ENCODE measurements at regions of chr16 and their contacts with region 1.

Region 1: DNA sequence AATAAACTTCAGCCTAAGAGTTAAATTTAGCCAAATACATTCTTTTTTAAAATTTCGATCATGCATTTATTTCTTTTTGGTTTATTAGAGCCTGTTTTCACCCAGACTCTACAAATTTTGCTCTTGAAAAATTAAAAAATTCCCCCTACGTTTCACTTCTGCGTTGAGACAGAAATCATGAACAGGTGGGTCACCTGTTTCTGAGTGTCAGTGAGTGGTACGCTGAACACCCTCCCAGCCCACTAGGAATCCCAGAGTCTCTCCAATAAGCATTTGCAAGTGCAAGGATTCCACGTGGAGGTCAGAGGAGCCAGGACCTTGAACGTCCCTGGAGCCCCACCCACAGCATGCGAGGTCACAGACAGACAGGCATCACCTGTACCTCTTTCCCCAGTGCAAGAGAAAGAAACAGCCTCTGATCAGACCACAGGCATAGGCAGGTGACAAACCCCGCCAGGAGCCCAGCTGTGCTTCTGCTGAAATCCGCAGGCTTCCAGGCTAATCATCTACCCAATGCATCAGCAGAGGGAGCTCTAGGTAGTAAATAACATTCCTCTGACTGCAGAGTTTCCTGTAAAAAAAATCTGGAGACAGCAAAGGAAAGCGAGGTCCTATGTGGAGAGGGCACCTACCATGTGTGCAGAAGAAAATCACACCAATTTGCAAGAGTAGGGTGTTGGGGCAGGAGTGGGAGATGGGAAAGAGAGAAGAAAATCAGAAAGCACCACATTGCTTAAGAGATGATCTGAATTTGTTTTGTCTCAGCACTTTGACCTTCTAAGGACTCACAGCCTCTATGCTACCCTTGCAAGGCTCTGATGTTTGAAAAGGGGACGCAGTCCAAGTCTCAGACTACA is 5.9 kb upstream of the XYLT1 start:
- DNase-seq: no peak
- ATAC-seq: peak in 7 of 8 donors; percentile 58 to 77 (median 68)
- H3K4me3 ChIP-seq: no peak overlapping the region
- H3K27ac ChIP-seq: no peak overlapping the region
- H3K4me1 ChIP-seq: peaks cover 0 to 19% (median 0%) of the 10 kb centered on the region in 9 donors
- H3K27me3 ChIP-seq: peaks cover 0 to 68% (median 43%) of the 10 kb centered on the region in 7 donors
- CTCF ChIP-seq: peak in 8 of 9 donors; percentile 14 to 64 (median 54)

Region 2: DNA sequence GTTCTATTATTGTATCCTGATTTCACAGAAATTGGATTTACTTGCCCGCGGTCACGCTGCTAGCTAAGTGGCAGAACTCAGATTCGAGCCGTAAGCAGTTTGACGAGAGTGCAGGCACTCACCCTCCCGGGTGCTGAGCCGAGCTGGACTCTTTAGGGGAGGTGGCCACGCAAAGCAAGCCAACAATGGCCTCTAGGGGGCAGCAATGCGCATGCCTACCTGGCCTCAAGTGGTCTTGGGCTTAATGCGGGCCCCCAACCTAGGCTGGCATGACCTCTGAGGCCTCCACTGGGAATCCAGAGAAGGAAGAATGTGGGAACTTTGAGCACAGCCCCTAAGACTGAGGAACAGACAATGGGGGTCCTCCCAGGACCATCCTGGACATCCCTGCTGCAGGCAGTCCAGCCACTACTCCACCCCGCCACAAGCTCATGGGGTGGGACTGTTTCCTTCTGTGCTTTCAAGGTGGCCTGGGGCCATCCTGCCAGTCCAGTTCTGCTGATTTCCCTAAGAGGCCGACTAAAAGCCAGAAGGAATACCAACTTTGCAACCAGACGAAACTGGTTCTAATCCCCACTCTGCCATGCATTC is 282.4 kb before region 1 on chr16:
- intact Hi-C with region 1: loop called in 1 of 10 experiments (anchors 10 kb)
- DNase-seq: peak; percentile 6 to 45
- ATAC-seq: peak in 2 of 8 donors; percentile 51 to 52
- H3K4me3 ChIP-seq: no peak overlapping the region
- H3K27ac ChIP-seq: no peak overlapping the region
- H3K4me1 ChIP-seq: no peaks in the 10 kb centered on the region
- H3K27me3 ChIP-seq: no peaks in the 10 kb centered on the region
- CTCF ChIP-seq: peak; percentile 31 to 81 (median 61)

Region 3: GRCh38 chr16:17439580-17439979 is 37.1 kb before region 1 on chr16:
- intact Hi-C with region 1: no loop called
- DNase-seq: no peak
- ATAC-seq: no peak
- H3K4me3 ChIP-seq: no peak overlapping the region
- H3K27ac ChIP-seq: no peak overlapping the region
- H3K4me1 ChIP-seq: peaks cover 0 to 17% (median 8%) of the 10 kb centered on the region in 9 donors
- H3K27me3 ChIP-seq: peaks cover 0 to 2% (median 0%) of the 10 kb centered on the region in 7 donors
- CTCF ChIP-seq: no peak

Region 4: GRCh38 chr16:17578921-17579874 is 102.6 kb after region 1 on chr16:
- intact Hi-C with region 1: loop called in 4 of 10 experiments (anchors 5 to 10 kb)
- DNase-seq: peak in 1 of 2 donors; percentile 58
- ATAC-seq: peak in 7 of 8 donors; percentile 45 to 83 (median 71)
- H3K4me3 ChIP-seq: no peak overlapping the region
- H3K27ac ChIP-seq: no peak overlapping the region
- H3K4me1 ChIP-seq: peaks cover 0 to 10% (median 0%) of the 10 kb centered on the region in 9 donors
- H3K27me3 ChIP-seq: peaks cover 0 to 5% (median 0%) of the 10 kb centered on the region in 7 donors
- CTCF ChIP-seq: peak; percentile 60 to 89 (median 83)

Measured in heart right ventricle (tissue), 16 donors.